Mammary epithelial cell (primary cell): ENCODE measurements at regions of chr4 and their contacts with region 1.

Region 1: GRCh38 chr4:15805583-15806517 is 27.7 kb downstream of the CD38 start:
- DNase-seq: peak; percentile 56
- H3K4me3 ChIP-seq: no peak overlapping the region
- H3K27ac ChIP-seq: no peak overlapping the region
- H3K4me1 ChIP-seq: no peaks in the 10 kb centered on the region
- H3K27me3 ChIP-seq: no peaks in the 10 kb centered on the region
- CTCF ChIP-seq: peak; percentile 82 to 86

Region 2: GRCh38 chr4:15868111-15868510 is 62.3 kb after region 1 on chr4:
- CTCF ChIA-PET with region 1: no interaction called
- dilution Hi-C with region 1: no loop called
- in situ Hi-C with region 1: loop called in 1 of 2 experiments (anchors 10 kb)
- intact Hi-C with region 1: no loop called
- DNase-seq: no peak
- H3K4me3 ChIP-seq: no peak overlapping the region
- H3K27ac ChIP-seq: no peak overlapping the region
- H3K4me1 ChIP-seq: no peaks in the 10 kb centered on the region
- H3K27me3 ChIP-seq: no peaks in the 10 kb centered on the region
- CTCF ChIP-seq: peak in 1 of 2 donors; percentile 25

Region 3: DNA sequence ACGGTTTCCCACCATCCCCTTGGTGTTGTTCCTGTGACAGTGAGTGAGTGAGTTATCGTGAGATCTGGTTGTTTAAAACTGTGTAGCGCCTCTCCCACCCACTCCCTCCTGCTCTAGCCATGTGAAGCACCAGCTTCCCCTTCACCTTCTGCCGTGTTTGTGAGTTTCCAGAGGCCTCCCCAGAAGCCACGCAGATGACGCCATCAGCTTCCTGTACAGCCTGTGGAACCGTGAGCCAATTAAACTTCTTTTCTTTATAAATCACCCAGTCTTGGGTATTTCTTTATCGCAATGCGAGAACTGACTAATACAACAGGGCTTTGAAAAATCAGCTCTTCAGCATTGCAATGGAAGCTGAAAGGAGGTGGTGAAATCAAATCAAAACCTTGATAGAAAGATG is 82.7 kb after region 1 on chr4:
- CTCF ChIA-PET with region 1: interaction called, 5 read pairs
- dilution Hi-C with region 1: loop called (anchors 5 kb)
- in situ Hi-C with region 1: loop called in 1 of 2 experiments (anchors 5 kb)
- intact Hi-C with region 1: no loop called
- DNase-seq: no peak
- H3K4me3 ChIP-seq: no peak overlapping the region
- H3K27ac ChIP-seq: no peak overlapping the region
- H3K4me1 ChIP-seq: peaks cover 13% of the 10 kb centered on the region
- H3K27me3 ChIP-seq: no peaks in the 10 kb centered on the region
- CTCF ChIP-seq: no peak

Region 4: DNA sequence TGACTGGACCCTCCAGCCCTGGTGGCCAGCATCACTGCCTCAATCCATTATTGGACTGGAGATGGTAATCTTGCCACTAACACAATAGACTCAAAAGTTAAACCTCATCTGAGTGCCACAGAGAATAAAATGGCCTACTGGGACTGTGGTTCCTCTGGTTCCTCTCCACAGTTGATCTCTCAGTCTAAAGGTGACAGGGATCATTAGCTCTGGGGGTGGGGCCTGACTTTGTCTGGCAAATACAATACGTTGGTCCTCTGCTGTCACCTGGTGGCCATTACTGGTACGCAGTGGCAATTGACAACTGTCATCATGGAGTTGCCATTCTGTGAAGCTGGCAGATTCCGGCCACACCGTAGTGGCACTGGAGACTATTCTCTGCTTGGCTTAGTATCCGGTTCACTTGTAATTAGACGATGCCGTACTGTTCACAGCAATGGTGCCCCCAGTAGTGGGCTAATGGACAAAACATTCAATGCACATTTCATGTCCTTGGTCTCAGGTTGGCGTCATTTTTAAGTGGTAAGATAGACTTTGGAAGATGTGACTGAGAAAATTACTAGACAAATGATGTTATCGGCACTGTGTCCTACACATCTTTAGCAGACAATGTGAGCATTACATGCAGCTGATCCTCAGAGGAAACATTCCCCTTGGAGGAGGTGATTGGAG is 150.5 kb after region 1 on chr4:
- CTCF ChIA-PET with region 1: interaction called, 24 read pairs
- dilution Hi-C with region 1: no loop called
- in situ Hi-C with region 1: loop called (anchors 5 kb)
- intact Hi-C with region 1: loop called (anchors 1 kb)
- DNase-seq: peak; percentile 68
- H3K4me3 ChIP-seq: no peak overlapping the region
- H3K27ac ChIP-seq: no peak overlapping the region
- H3K4me1 ChIP-seq: peaks cover 5% of the 10 kb centered on the region
- H3K27me3 ChIP-seq: no peaks in the 10 kb centered on the region
- CTCF ChIP-seq: peak; percentile 99 to 100

Region 5: GRCh38 chr4:16001484-16001858 is 195.6 kb after region 1 on chr4:
- CTCF ChIA-PET with region 1: interaction called, 6 read pairs
- dilution Hi-C with region 1: no loop called
- in situ Hi-C with region 1: loop called (anchors 5 kb)
- intact Hi-C with region 1: loop called (anchors 1 kb)
- DNase-seq: peak; percentile 56
- H3K4me3 ChIP-seq: no peak overlapping the region
- H3K27ac ChIP-seq: no peak overlapping the region
- H3K4me1 ChIP-seq: no peaks in the 10 kb centered on the region
- H3K27me3 ChIP-seq: peaks cover 6% of the 10 kb centered on the region
- CTCF ChIP-seq: peak; percentile 80 to 86